Heart left ventricle (tissue), 16 donors: ENCODE measurements at regions of chr12 and their contacts with region 1.

Region 1: GRCh38 chr12:94101738-94102660 is 46.4 kb upstream of the PLXNC1 start:
- DNase-seq: peak; percentile 83 to 91 (median 85)
- ATAC-seq: peak; percentile 80 to 91 (median 88)
- H3K4me3 ChIP-seq: peak overlapping the region; percentile 41 to 81 (median 70)
- H3K27ac ChIP-seq: peak overlapping the region in 11 of 12 donors; percentile 48 to 82 (median 61)
- H3K4me1 ChIP-seq: peaks cover 0 to 17% (median 10%) of the 10 kb centered on the region in 12 donors
- H3K27me3 ChIP-seq: peaks cover 0 to 4% (median 0%) of the 10 kb centered on the region in 9 donors
- CTCF ChIP-seq: peak; percentile 76 to 90 (median 80)
- POLR2A ChIP-seq: no peak

Region 2: GRCh38 chr12:93002293-93003054 is 1099.5 kb before region 1 on chr12:
- intact Hi-C with region 1: loop called in 1 of 10 experiments (anchors 10 kb)
- DNase-seq: no peak
- ATAC-seq: peak in 3 of 4 donors; percentile 27 to 73 (median 70)
- H3K4me3 ChIP-seq: no peak overlapping the region
- H3K27ac ChIP-seq: peak overlapping the region in 3 of 12 donors; percentile 34 to 49 (median 37)
- H3K4me1 ChIP-seq: peaks cover 0 to 13% (median 4%) of the 10 kb centered on the region in 12 donors
- H3K27me3 ChIP-seq: no peaks in the 10 kb centered on the region
- CTCF ChIP-seq: no peak
- POLR2A ChIP-seq: no peak

Region 3: GRCh38 chr12:93569656-93570551 is 532.1 kb before region 1 on chr12:
- intact Hi-C with region 1: loop called (anchors 1 to 2 kb)
- DNase-seq: peak; percentile 90 to 92 (median 91)
- ATAC-seq: peak; percentile 76 to 84 (median 79)
- H3K4me3 ChIP-seq: peak overlapping the region; percentile 61 to 90 (median 72)
- H3K27ac ChIP-seq: peak overlapping the region; percentile 81 to 99 (median 96)
- H3K4me1 ChIP-seq: peaks cover 0 to 35% (median 6%) of the 10 kb centered on the region in 12 donors
- H3K27me3 ChIP-seq: peaks cover 0 to 21% (median 0%) of the 10 kb centered on the region in 9 donors
- CTCF ChIP-seq: peak; percentile 60 to 93 (median 88)
- POLR2A ChIP-seq: no peak

Region 4: DNA sequence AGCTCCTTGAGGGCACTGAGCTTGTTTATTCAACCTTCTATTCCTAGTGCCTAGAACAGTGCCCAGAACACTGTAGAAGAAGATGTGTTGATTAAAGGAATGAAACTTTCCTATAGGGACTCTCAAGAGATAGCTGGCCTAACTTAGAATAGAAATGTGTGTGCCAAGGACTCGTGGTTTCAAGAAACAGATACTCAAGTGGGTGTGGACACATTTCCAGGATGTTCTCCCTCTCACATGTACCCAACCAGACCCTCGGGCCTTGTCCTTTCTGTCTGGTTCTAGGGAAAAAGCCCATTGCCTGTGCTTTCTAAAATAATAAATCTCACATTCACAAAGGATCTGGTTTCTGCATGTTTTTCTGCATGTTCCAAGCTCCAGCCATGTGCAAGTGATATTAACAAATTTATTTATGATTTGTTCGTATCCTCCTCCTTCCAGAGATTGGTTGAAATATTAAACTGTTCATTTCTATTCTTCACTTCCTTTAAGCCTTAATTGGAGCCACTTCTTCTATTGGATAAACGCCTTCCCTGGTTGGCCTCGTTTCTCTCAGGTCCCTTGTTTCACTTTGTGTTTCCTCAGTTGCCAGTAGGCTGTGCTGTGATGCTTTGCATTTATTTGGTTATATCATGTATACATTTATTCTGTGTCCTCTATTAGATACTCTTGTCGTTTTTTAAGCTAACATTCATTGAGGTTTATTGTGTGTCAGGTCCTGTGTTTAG is 335.0 kb before region 1 on chr12:
- intact Hi-C with region 1: loop called in 9 of 10 experiments (anchors 2 to 10 kb)
- DNase-seq: peak in 4 of 5 donors; percentile 37 to 60 (median 50)
- ATAC-seq: peak; percentile 79 to 88 (median 82)
- H3K4me3 ChIP-seq: peak overlapping the region in 1 of 12 donors; percentile 5
- H3K27ac ChIP-seq: peak overlapping the region; percentile 27 to 72 (median 55)
- H3K4me1 ChIP-seq: peaks cover 0 to 56% (median 42%) of the 10 kb centered on the region in 12 donors
- H3K27me3 ChIP-seq: no peaks in the 10 kb centered on the region
- CTCF ChIP-seq: peak; percentile 38 to 81 (median 64)
- POLR2A ChIP-seq: no peak

Region 5: GRCh38 chr12:93908846-93909567 is 193.0 kb before region 1 on chr12:
- intact Hi-C with region 1: loop called in 1 of 10 experiments (anchors 10 kb)
- DNase-seq: peak in 3 of 5 donors; percentile 23 to 62 (median 34)
- ATAC-seq: peak; percentile 70 to 93 (median 81)
- H3K4me3 ChIP-seq: no peak overlapping the region
- H3K27ac ChIP-seq: peak overlapping the region in 3 of 12 donors; percentile 33 to 49 (median 47)
- H3K4me1 ChIP-seq: peaks cover 0 to 18% (median 0%) of the 10 kb centered on the region in 12 donors
- H3K27me3 ChIP-seq: no peaks in the 10 kb centered on the region
- CTCF ChIP-seq: no peak
- POLR2A ChIP-seq: no peak